ENCODE measurements at regions of chr9 and their contacts with region 1.

Region 1: DNA sequence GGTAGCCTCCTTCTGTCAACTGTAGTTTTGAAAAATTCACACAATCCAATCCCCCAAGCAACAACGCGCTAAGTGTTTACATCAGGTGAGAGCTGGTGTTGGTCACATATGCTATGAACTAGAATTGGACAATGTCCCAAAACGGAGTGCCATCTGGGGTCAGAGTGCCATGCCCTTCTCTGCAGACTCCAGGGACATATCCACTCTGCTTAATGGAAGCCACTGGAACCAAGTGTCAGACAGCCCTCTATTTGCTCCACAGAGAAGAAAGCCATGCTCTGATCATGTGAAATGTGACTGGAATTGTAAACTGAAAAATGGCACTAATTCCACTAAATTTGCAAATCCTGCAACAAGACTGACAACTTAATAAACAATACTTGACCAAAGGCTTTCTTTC is 12.2 kb downstream of the ABCA1 start:
- DNase-seq: no peak

Region 2: GRCh38 chr9:104879555-104880309 is 36.0 kb before region 1 on chr9:
- intact Hi-C with region 1: loop called (anchors 5 kb)
- DNase-seq: no peak

Region 3: DNA sequence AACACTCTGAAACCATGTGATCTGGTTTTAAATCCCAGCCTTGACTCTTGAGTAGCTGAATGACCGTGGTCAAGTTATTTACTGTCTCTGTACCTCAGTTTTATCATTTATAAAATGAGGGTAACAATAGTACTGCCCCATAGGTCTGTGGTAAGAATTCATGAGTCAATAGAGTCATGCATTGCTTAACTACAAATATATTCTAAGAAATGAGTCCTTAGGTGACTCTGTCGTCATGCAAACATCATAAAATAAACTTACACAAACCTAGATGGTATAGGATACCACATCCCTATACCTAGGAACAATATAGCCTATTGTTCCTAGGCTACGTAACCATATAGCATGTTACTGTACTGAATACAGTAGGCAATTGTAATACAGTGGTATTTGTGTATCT is 32.5 kb after region 1 on chr9:
- intact Hi-C with region 1: no loop called
- DNase-seq: no peak

Measured in cardiac septum (tissue), 1 donor.